Activated CD8-positive, alpha-beta T cell treated with anti-CD3 and anti-CD28 coated beads, Interleukin-2, amount 10 ng/mL, durations not matched to agents 7 days and 5 days (primary cell): ENCODE measurements at regions of chr3 and their contacts with region 1.

Region 1: GRCh38 chr3:146189519-146190173 is 28.7 kb upstream of the PLOD2 start:
- DNase-seq: peak; percentile 25
- ATAC-seq: peak; percentile 87
- H3K4me3 Mint-ChIP-seq: no peak overlapping the region
- H3K27ac Mint-ChIP-seq: no peak overlapping the region
- H3K4me1 Mint-ChIP-seq: no peaks in the 10 kb centered on the region
- H3K27me3 Mint-ChIP-seq: peaks cover 4% of the 10 kb centered on the region

Region 2: GRCh38 chr3:146065573-146066006 is 124.1 kb before region 1 on chr3:
- CTCF ChIA-PET with region 1: interaction called, 30 read pairs
- POLR2A ChIA-PET with region 1: no interaction called
- DNase-seq: peak; percentile 35
- ATAC-seq: no peak
- H3K4me3 Mint-ChIP-seq: no peak overlapping the region
- H3K27ac Mint-ChIP-seq: no peak overlapping the region
- H3K4me1 Mint-ChIP-seq: no peaks in the 10 kb centered on the region
- H3K27me3 Mint-ChIP-seq: no peaks in the 10 kb centered on the region

Region 3: GRCh38 chr3:146177519-146177918 is 12.1 kb before region 1 on chr3:
- CTCF ChIA-PET with region 1: interaction called, 10 read pairs
- POLR2A ChIA-PET with region 1: no interaction called
- DNase-seq: no peak
- ATAC-seq: no peak
- H3K4me3 Mint-ChIP-seq: no peak overlapping the region
- H3K27ac Mint-ChIP-seq: no peak overlapping the region
- H3K4me1 Mint-ChIP-seq: no peaks in the 10 kb centered on the region
- H3K27me3 Mint-ChIP-seq: peaks cover 8% of the 10 kb centered on the region

Region 4: DNA sequence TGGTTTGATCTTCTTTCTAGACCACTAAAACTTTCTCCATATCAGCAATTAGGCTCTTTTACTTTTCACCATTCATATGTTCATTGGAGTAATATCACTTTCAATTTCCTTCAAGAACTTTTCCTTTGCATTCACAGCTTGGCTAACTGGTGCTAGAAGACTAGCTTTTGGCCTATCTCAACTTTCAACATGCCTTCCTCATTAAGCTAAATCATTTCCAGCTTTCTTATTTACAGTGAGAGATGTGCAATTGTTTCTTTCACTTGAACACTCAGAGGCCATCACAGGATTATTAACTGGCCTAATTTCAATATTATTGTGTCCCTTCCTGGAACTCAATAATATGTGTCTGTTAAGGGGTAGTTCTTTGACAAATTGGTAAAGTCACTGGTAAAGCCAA is 14.1 kb after region 1 on chr3:
- CTCF ChIA-PET with region 1: interaction called, 11 read pairs
- POLR2A ChIA-PET with region 1: interaction called, 3 read pairs
- DNase-seq: no peak
- ATAC-seq: no peak
- H3K4me3 Mint-ChIP-seq: no peak overlapping the region
- H3K27ac Mint-ChIP-seq: no peak overlapping the region
- H3K4me1 Mint-ChIP-seq: no peaks in the 10 kb centered on the region
- H3K27me3 Mint-ChIP-seq: peaks cover 11% of the 10 kb centered on the region

Region 5: DNA sequence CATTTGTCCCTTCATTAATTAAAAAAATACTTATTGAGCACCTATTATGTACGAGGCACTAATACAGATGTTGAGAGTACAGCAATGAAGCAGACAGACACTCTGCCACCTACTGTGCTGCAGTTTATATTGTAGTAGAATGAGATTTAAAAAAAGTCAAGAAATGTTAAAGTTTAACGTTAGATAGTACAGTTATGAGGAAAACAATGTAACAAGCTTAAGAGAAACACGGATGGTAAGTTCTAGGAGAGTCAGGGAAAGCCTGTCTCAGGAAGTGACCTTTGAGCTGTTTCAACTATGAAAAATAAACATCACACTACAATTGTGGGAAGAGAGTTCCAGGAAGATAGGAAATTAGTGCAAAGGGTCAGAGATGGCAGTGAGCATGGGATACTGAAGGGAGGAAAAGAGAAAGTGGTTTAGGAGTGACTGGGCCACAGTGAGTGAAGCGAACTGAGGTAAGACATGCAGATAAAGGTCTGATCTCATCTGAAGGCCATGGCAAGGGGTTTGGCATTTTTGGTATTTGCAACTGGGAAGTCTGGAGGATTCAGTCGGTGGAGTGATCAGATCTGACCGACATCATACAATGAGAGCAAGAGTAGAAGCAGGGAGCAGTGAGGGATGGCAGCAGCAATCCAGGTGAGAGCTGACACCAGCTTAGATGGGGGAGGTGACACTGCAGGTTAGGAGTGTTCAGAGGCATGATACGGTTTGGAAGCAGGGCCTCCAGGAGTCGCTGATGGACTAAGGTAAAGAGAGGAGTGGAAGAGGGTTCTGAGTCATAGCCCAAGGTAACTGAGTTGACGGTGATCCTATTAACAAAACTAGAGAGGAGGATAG is 32.8 kb after region 1 on chr3:
- CTCF ChIA-PET with region 1: no interaction called
- POLR2A ChIA-PET with region 1: no interaction called
- DNase-seq: no peak
- ATAC-seq: no peak
- H3K4me3 Mint-ChIP-seq: no peak overlapping the region
- H3K27ac Mint-ChIP-seq: no peak overlapping the region
- H3K4me1 Mint-ChIP-seq: no peaks in the 10 kb centered on the region
- H3K27me3 Mint-ChIP-seq: peaks cover 6% of the 10 kb centered on the region

Region 6: DNA sequence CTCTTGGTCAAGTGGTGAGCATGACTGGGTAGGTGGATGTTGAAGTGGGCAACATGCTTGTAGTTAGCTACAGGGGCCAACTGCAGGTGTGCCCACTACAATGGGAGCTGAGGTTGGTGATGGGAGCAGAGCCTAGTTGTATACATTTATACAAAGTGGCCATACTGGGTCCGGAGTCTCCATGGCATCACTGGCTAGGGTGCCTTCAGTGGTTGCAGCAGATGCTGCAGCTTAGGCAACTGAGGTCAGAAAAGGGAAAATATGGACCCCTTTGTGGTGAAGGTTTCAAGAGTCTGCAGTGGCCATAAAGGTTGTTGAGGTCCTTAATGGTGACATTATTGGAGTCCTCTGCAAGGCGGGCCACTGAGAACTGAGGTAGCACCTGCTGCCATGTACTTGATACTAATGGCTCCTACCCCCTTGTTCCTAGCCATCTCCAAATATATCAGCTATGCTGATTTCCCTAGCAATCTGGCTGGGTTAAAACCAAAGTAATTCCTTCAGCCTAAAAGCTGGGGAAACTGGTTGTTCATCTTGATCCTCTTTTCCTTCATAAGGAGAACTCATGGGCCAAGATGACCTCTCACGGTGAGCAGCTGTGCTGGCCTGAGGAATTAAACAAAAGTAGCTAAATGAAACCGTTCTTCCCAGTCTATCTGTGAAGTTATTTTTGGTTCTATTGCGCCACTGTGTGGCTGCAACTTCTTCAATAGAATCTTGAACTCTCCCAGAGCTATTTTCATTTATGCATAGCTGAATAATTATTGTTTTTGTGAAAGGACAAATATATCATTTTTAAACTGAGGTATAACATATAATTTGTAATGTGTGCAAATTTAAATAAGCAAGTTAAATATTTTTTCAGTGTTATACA is 137.3 kb after region 1 on chr3:
- CTCF ChIA-PET with region 1: interaction called, 24 read pairs
- POLR2A ChIA-PET with region 1: no interaction called
- DNase-seq: no peak
- ATAC-seq: no peak
- H3K4me3 Mint-ChIP-seq: no peak overlapping the region
- H3K27ac Mint-ChIP-seq: no peak overlapping the region
- H3K4me1 Mint-ChIP-seq: no peaks in the 10 kb centered on the region
- H3K27me3 Mint-ChIP-seq: peaks cover 4% of the 10 kb centered on the region

Region 7: DNA sequence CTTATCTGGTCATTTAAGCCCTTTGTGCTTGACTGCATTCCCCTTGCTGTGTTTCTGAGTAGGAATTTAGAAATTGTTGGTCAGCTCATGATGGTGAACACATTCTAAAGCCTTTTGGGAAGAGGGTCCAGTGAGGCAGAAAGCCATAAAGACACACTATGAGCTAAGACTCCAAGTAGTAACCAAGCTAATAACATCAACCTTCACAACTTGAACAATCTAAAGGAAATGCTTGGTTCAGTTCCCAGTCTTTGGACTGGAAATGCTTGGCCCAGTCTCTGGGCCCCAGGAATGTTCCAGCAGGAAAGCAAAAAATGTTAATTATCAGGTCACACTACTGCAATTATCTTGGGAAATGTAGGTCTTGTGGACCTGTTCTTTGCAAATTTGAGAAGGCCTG is 347.1 kb after region 1 on chr3:
- CTCF ChIA-PET with region 1: no interaction called
- POLR2A ChIA-PET with region 1: no interaction called
- DNase-seq: no peak
- ATAC-seq: no peak
- H3K4me3 Mint-ChIP-seq: no peak overlapping the region
- H3K27ac Mint-ChIP-seq: no peak overlapping the region
- H3K4me1 Mint-ChIP-seq: peaks cover 69% of the 10 kb centered on the region
- H3K27me3 Mint-ChIP-seq: no peaks in the 10 kb centered on the region

Region 8: GRCh38 chr3:146577662-146578061 is 388.0 kb after region 1 on chr3:
- CTCF ChIA-PET with region 1: interaction called, 17 read pairs
- POLR2A ChIA-PET with region 1: no interaction called
- DNase-seq: peak; percentile 53
- ATAC-seq: peak; percentile 67
- H3K4me3 Mint-ChIP-seq: no peak overlapping the region
- H3K27ac Mint-ChIP-seq: no peak overlapping the region
- H3K4me1 Mint-ChIP-seq: no peaks in the 10 kb centered on the region
- H3K27me3 Mint-ChIP-seq: peaks cover 11% of the 10 kb centered on the region